A549 (cell line): ENCODE measurements at regions of chr2 and their contacts with region 1.

Region 1: DNA sequence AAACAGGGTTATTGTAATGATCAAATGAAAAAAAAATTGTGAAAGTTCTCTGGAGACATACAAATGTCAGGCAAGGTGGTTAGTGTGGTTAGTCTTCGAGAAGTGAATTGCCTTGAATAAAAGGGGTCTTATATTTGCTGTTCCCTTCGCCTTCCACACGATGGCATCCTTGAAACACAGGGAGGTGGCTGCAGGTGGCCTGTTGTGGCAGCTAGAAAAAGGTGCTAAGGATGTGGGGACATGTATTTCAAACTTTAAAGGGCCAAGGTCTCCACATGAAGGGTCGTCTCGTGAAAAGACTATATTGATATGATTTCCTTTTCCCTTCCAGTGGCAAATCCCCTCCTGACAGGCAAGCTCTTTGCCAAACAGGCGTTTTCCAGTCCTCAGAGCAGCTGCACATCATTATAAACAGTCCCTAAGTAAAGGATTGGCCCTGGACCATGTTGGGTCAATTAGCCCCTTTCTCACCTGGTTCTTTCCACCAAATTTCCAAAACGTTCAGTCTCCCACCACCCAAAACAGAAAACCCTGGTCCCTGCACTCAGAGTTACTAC is 68.5 kb downstream of the COPS8 start:
- DNase-seq: peak; percentile 45 to 75
- ATAC-seq: peak; percentile 55 to 83; a peak in 3 of 6 replicates
- H3K4me3 ChIP-seq: no peak overlapping the region
- H3K27ac ChIP-seq: no peak overlapping the region
- H3K4me1 ChIP-seq: no peaks in the 10 kb centered on the region
- CTCF ChIP-seq: peak; percentile 74
- EP300 ChIP-seq: no peak
- POLR2A ChIP-seq: no peak
- RAD21 ChIP-seq: peak; percentile 90 to 98

Region 2: DNA sequence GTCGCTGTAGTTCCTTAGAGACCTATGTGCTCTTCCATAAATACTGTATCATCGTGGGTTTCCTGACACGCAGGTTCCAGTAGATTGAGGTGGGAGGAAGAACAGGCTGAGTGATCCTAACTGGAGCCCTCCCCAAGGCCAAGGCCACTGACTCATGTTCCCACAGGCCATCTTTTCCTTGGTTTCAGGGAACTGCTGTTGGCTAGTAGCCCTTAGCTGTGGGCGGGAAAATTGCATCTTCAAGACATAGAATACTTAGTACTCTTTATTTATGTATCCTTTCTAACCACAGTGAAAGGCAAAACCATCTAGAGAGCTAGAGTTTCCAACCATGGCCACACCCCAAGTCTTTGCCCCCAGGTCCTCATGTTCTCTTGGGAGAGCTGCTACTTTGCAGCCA is 12.6 kb before region 1 on chr2:
- CTCF ChIA-PET with region 1: interaction called, 12 read pairs
- POLR2A ChIA-PET with region 1: no interaction called
- DNase-seq: no peak
- ATAC-seq: no peak
- H3K4me3 ChIP-seq: no peak overlapping the region
- H3K27ac ChIP-seq: no peak overlapping the region
- H3K4me1 ChIP-seq: peaks cover 8% of the 10 kb centered on the region; the same call in 1 of the 3 replicates
- CTCF ChIP-seq: no peak
- EP300 ChIP-seq: no peak
- POLR2A ChIP-seq: no peak
- RAD21 ChIP-seq: no peak

Region 3: DNA sequence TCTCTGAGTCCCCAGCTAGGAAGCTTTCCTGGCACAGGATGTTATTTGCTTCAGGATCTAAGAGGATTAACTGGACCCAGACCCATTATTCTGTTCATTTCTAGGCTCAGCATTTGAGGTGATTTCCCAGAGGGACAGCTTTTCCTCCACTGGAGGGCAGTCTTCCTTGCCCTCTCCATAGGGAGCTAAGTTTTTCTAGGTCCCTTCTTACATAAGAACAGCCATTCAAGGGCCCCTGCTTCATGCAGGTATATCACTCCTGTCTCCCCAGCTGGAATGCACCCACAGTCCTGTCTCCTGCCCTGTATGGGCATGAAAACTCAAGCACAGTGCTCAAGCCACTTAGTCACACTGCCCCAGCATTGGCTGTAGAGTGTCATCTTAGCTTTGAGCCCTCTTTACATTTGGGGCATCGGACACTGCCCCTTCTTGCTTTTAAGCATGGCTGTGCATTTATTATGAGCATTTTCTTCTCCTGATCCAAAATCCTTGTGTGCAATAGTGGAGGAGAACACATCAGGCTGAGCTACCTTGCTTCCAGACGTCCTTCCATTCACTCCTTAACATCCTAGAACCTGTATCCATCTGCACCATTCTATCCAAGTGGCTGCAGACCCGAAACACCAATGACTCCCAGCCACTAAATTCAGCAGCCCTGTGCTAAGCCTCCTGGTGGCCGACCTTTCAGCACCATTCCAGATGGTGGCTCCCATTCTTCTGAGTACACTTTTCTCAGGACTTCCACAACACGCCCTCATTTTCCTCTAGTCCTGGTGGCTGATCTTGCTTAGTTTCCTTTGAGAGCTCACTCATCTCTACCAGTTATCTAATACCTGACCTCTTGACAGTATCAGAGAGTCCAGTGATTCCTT is 11.5 kb after region 1 on chr2:
- CTCF ChIA-PET with region 1: interaction called, 16 read pairs
- POLR2A ChIA-PET with region 1: no interaction called
- DNase-seq: peak in 1 of 2 experiments; percentile 35
- ATAC-seq: peak; percentile 68 to 80; a peak in 5 of 6 replicates
- H3K4me3 ChIP-seq: no peak overlapping the region
- H3K27ac ChIP-seq: no peak overlapping the region; a peak in 1 of 6 replicates
- H3K4me1 ChIP-seq: no peaks in the 10 kb centered on the region
- CTCF ChIP-seq: peak; percentile 52
- EP300 ChIP-seq: no peak
- POLR2A ChIP-seq: no peak
- RAD21 ChIP-seq: peak; percentile 38 to 63; a peak in 4 of 5 replicates

Region 4: GRCh38 chr2:237320801-237321560 is 166.8 kb after region 1 on chr2:
- CTCF ChIA-PET with region 1: no interaction called
- POLR2A ChIA-PET with region 1: no interaction called
- DNase-seq: no peak
- ATAC-seq: no peak
- H3K4me3 ChIP-seq: no peak overlapping the region
- H3K27ac ChIP-seq: no peak overlapping the region
- H3K4me1 ChIP-seq: no peaks in the 10 kb centered on the region
- CTCF ChIP-seq: no peak
- EP300 ChIP-seq: no peak
- POLR2A ChIP-seq: no peak
- RAD21 ChIP-seq: no peak